Transverse colon (tissue), 4 donors: ENCODE measurements at regions of chr21 and their contacts with region 1.

Region 1: GRCh38 chr21:42794551-42794950 is 84.8 kb downstream of the WDR4 start:
- DNase-seq: no peak
- H3K4me3 ChIP-seq: no peak overlapping the region
- H3K27ac ChIP-seq: no peak overlapping the region
- H3K4me1 ChIP-seq: peaks cover 0 to 10% (median under 1%) of the 10 kb centered on the region in 4 donors
- H3K27me3 ChIP-seq: peaks cover 4% of the 10 kb centered on the region
- CTCF ChIP-seq: no peak
- EP300 ChIP-seq: no peak
- POLR2A ChIP-seq: no peak

Region 2: GRCh38 chr21:42806509-42807140 is 12.1 kb after region 1 on chr21:
- in situ Hi-C with region 1: no loop called
- intact Hi-C with region 1: loop called (anchors 1 kb)
- DNase-seq: no peak
- H3K4me3 ChIP-seq: no peak overlapping the region
- H3K27ac ChIP-seq: no peak overlapping the region
- H3K4me1 ChIP-seq: peaks cover 0 to 4% (median 0%) of the 10 kb centered on the region in 4 donors
- H3K27me3 ChIP-seq: peaks cover 3% of the 10 kb centered on the region
- CTCF ChIP-seq: no peak
- EP300 ChIP-seq: no peak
- POLR2A ChIP-seq: no peak